PC-9 (cell line): ENCODE measurements at regions of chr14 and their contacts with region 1.

Region 1: GRCh38 chr14:93137864-93138263 is 22.1 kb upstream of the ITPK1 start:
- DNase-seq: no peak
- H3K4me3 ChIP-seq: no peak overlapping the region
- H3K27ac ChIP-seq: no peak overlapping the region
- H3K4me1 ChIP-seq: peaks cover 30% of the 10 kb centered on the region
- H3K27me3 ChIP-seq: no peaks in the 10 kb centered on the region
- CTCF ChIP-seq: no peak

Region 2: GRCh38 chr14:92880869-92881289 is 257.0 kb before region 1 on chr14:
- CTCF ChIA-PET with region 1: interaction called, 3 read pairs
- POLR2A ChIA-PET with region 1: no interaction called
- intact Hi-C with region 1: loop called (anchors 2 kb)
- DNase-seq: peak; percentile 10 to 63
- H3K4me3 ChIP-seq: peak overlapping the region; percentile 42; the same call in 1 of the 2 replicates
- H3K27ac ChIP-seq: no peak overlapping the region
- H3K4me1 ChIP-seq: peaks cover 13% of the 10 kb centered on the region
- H3K27me3 ChIP-seq: peaks cover 8% of the 10 kb centered on the region; the same call in 1 of the 2 replicates
- CTCF ChIP-seq: peak; percentile 71

Region 3: DNA sequence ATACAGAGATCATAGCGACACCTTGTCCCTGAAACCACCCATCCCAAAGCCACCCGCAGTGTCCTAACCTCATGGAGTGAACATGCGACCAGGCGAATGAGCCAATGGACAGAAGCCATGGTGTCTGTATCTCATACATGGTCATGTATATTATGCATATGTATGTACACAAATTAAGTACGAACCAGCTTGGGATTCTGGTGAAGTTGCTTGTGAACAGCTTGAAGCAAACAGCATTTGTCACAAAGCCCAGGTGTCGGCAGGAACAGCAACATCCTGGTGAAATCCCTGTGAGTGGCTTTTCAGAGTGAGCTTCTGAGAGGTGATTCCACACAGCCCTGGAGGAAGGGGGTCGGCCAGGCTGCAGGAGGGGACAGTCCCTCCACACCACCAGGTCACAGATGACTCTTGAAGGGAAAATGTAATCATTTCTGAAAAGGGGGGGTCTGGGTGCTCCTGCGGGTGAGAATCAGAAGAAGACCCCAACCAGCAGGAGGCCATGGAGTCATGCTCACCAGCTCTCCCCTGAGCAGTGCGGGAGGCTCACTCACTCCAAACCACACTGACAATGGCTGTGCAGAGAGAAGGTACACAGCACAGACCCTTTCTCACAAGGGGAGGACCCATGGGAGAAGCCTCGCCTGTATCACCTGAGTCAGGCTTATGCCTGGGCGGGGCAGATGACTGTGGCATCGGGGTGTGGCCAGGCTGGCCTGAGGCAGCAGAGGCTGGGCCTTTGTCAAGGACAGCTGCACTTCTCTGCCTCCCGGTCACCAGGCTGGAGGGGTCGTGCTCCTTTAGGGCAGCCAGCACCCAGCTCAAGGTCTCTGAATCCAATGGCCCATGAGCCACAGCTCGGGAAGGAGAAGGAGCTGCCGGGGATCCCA is 200.6 kb before region 1 on chr14:
- CTCF ChIA-PET with region 1: no interaction called
- POLR2A ChIA-PET with region 1: no interaction called
- intact Hi-C with region 1: no loop called
- DNase-seq: peak; percentile 50 to 57
- H3K4me3 ChIP-seq: no peak overlapping the region
- H3K27ac ChIP-seq: no peak overlapping the region
- H3K4me1 ChIP-seq: peaks cover 7% of the 10 kb centered on the region
- H3K27me3 ChIP-seq: no peaks in the 10 kb centered on the region
- CTCF ChIP-seq: no peak

Region 4: GRCh38 chr14:92973261-92973797 is 164.5 kb before region 1 on chr14:
- CTCF ChIA-PET with region 1: no interaction called
- POLR2A ChIA-PET with region 1: no interaction called
- intact Hi-C with region 1: loop called (anchors 2 kb)
- DNase-seq: peak; percentile 52 to 75
- H3K4me3 ChIP-seq: no peak overlapping the region
- H3K27ac ChIP-seq: no peak overlapping the region
- H3K4me1 ChIP-seq: no peaks in the 10 kb centered on the region
- H3K27me3 ChIP-seq: no peaks in the 10 kb centered on the region
- CTCF ChIP-seq: peak; percentile 90

Region 5: GRCh38 chr14:94515426-94515825 is 1377.6 kb after region 1 on chr14:
- CTCF ChIA-PET with region 1: no interaction called
- POLR2A ChIA-PET with region 1: no interaction called
- intact Hi-C with region 1: no loop called
- DNase-seq: no peak
- H3K4me3 ChIP-seq: no peak overlapping the region
- H3K27ac ChIP-seq: no peak overlapping the region
- H3K4me1 ChIP-seq: no peaks in the 10 kb centered on the region
- H3K27me3 ChIP-seq: peaks cover 26% of the 10 kb centered on the region
- CTCF ChIP-seq: no peak